Thyroid gland (tissue), 4 donors: ENCODE measurements at regions of chr5 and their contacts with region 1.

Region 1: GRCh38 chr5:76771705-76772405 is 47.0 kb upstream of the F2RL1 start:
- DNase-seq: no peak
- H3K4me3 ChIP-seq: no peak overlapping the region
- H3K27ac ChIP-seq: no peak overlapping the region
- H3K4me1 ChIP-seq: no peaks in the 10 kb centered on the region
- H3K27me3 ChIP-seq: no peaks in the 10 kb centered on the region
- CTCF ChIP-seq: no peak
- POLR2A ChIP-seq: no peak

Region 2: DNA sequence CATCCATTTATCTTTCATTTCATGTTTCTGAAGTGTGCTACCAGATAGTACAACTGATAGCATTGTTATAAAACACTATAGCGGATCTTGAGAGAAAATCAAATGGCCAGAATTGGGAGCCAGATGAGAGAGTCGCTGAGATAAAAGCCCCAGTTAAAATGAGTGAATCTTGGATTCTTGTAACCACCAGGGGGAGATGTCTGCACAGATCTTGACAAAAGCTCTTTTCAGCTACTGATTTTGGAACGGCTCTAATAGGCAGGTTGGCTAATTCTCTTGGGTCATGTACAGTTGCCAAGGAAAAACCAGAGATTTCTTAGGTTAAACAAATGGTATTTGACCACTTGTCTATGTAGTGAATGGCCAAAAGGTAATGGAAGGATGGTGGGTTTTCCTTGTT is 170.4 kb before region 1 on chr5:
- intact Hi-C with region 1: loop called (anchors 5 kb)
- DNase-seq: no peak
- H3K4me3 ChIP-seq: no peak overlapping the region
- H3K27ac ChIP-seq: no peak overlapping the region
- H3K4me1 ChIP-seq: no peaks in the 10 kb centered on the region
- H3K27me3 ChIP-seq: no peaks in the 10 kb centered on the region
- CTCF ChIP-seq: peak in 5 of 6 experiments; percentile 52 to 88 (median 69)
- POLR2A ChIP-seq: no peak

Region 3: GRCh38 chr5:76715736-76716455 is 56.0 kb before region 1 on chr5 and contains the start of gene F2R:
- intact Hi-C with region 1: loop called (anchors 10 kb)
- DNase-seq: peak; percentile 28 to 49
- H3K4me3 ChIP-seq: peak within 1 kb of the TSS; percentile 66 to 80 (median 67)
- H3K27ac ChIP-seq: peak within 1 kb of the TSS in 2 of 3 donors; percentile 57 to 69
- H3K4me1 ChIP-seq: peaks cover 6 to 9% of the 10 kb centered on the region in 2 donors
- H3K27me3 ChIP-seq: no peaks in the 10 kb centered on the region
- CTCF ChIP-seq: peak in 5 of 6 experiments; percentile 14 to 68 (median 32)
- POLR2A ChIP-seq: no peak
- total RNA-seq, gene F2R: 5.7 to 27.9 (median 8.8) TPM

Region 4: GRCh38 chr5:76849419-76850291 is 77.8 kb after region 1 on chr5 and contains the start of gene S100Z:
- intact Hi-C with region 1: no loop called
- DNase-seq: no peak
- H3K4me3 ChIP-seq: no peak within 1 kb of the TSS
- H3K27ac ChIP-seq: no peak within 1 kb of the TSS
- H3K4me1 ChIP-seq: no peaks in the 10 kb centered on the region
- H3K27me3 ChIP-seq: no peaks in the 10 kb centered on the region
- CTCF ChIP-seq: no peak
- POLR2A ChIP-seq: no peak
- total RNA-seq, gene S100Z: not detected